Natural killer cell (primary cell): ENCODE measurements at regions of chr4 and their contacts with region 1.

Region 1: DNA sequence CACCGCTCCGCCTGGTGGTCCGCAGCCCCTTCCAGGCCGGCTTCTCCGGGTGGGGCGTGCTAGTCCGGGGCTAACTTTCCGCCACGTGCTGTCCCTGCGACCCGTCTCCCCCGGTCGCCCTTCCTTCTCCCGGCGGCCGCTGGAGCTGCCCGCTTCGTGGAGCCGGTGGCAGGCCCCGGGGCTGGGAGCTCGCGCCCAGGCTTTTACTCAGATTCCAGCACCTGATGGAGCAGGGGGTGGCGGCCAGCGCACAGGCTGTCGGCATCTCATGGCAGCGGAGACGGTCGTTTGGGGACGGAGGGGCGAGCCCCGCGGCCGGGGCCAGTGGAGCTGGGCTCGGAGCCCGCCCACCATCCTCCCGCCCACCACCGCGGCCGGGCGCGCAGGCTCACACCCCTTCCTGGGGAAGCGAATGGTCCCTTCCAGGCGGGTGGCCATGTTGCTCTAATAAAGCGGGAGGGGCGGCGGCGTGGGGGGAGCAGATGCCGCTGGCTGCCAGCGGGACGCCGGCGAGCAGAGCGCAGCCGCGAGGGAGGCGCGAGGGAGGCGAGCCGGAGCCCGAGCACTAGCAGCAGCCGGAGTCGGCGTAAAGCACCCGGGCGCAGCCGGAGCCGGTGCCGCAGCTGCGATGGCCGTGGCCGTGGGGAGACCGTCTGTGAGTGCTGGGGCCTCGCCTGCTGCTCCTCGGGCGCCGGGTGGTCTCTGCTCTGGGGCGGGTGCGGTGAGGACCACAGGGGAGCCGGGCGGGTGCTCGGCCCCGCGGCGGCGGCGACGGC is at the start of gene SEPTIN11:
- DNase-seq: peak; percentile 81 to 93
- ATAC-seq: peak; percentile 78 to 88 (median 84)
- H3K4me3 ChIP-seq: peak within 1 kb of the TSS; percentile 77
- H3K4me3 Mint-ChIP-seq: peak within 1 kb of the TSS; percentile 93
- H3K27ac ChIP-seq: peak within 1 kb of the TSS; percentile 54
- H3K27ac Mint-ChIP-seq: peak within 1 kb of the TSS; percentile 77 to 90
- H3K4me1 ChIP-seq: peaks cover 16% of the 10 kb centered on the region
- H3K4me1 Mint-ChIP-seq: peaks cover 17 to 47% of the 10 kb centered on the region in 2 donors
- H3K27me3 ChIP-seq: no peaks in the 10 kb centered on the region
- H3K27me3 Mint-ChIP-seq: no peaks in the 10 kb centered on the region
- CTCF ChIP-seq: no peak
- total RNA-seq, gene SEPTIN11: 38.6 to 52.8 (median 46.2) TPM

Region 2: DNA sequence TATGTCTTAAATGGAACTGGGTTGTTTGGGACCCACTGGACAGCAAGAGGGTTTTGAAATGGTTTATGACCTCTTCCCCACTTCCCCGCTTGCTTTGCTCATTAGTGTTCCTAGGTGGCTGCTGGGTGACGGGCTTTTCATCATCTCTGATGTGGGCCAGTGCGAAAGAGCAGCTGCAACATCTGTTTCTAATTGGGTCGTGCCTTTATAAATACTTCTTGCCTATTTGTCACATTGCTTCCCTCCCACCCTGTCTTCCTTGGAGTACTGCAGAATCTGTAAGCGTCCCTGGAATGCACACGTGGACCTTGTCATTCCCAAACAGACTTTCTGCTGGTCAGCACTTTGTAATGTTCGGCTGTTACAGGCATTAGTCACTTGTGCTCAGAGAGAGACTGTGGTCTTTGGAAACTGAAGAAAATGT is 35.3 kb after region 1 on chr4:
- intact Hi-C with region 1: loop called (anchors 2 kb)
- DNase-seq: no peak
- ATAC-seq: no peak
- H3K4me3 ChIP-seq: no peak overlapping the region
- H3K4me3 Mint-ChIP-seq: no peak overlapping the region
- H3K27ac ChIP-seq: no peak overlapping the region
- H3K27ac Mint-ChIP-seq: peak overlapping the region in 1 of 2 donors; percentile 10
- H3K4me1 ChIP-seq: peaks cover 30% of the 10 kb centered on the region
- H3K4me1 Mint-ChIP-seq: peaks cover 57 to 64% of the 10 kb centered on the region in 2 donors
- H3K27me3 ChIP-seq: no peaks in the 10 kb centered on the region
- H3K27me3 Mint-ChIP-seq: no peaks in the 10 kb centered on the region
- CTCF ChIP-seq: no peak

Region 3: GRCh38 chr4:77075869-77076799 is 126.7 kb after region 1 on chr4 and contains the start of gene CCNI:
- intact Hi-C with region 1: loop called (anchors 1 kb)
- DNase-seq: peak; percentile 96 to 97
- ATAC-seq: peak; percentile 78 to 94 (median 82)
- H3K4me3 ChIP-seq: peak within 1 kb of the TSS; percentile 61
- H3K4me3 Mint-ChIP-seq: peak within 1 kb of the TSS; percentile 95
- H3K27ac ChIP-seq: peak within 1 kb of the TSS; percentile 99
- H3K27ac Mint-ChIP-seq: no peak within 1 kb of the TSS
- H3K4me1 ChIP-seq: peaks cover 16% of the 10 kb centered on the region
- H3K4me1 Mint-ChIP-seq: peaks cover 43 to 46% of the 10 kb centered on the region in 2 donors
- H3K27me3 ChIP-seq: no peaks in the 10 kb centered on the region
- H3K27me3 Mint-ChIP-seq: peaks cover 0 to 3% of the 10 kb centered on the region in 2 donors
- CTCF ChIP-seq: no peak
- total RNA-seq, gene CCNI: 243 to 266 (median 259) TPM